Astrocyte of the cerebellum (primary cell): ENCODE measurements at regions of chr10 and their contacts with region 1.

Region 1: GRCh38 chr10:70324339-70324861 is 40.6 kb upstream of the NPFFR1 start:
- DNase-seq: no peak
- H3K4me3 ChIP-seq: no peak overlapping the region
- CTCF ChIP-seq: no peak

Region 2: DNA sequence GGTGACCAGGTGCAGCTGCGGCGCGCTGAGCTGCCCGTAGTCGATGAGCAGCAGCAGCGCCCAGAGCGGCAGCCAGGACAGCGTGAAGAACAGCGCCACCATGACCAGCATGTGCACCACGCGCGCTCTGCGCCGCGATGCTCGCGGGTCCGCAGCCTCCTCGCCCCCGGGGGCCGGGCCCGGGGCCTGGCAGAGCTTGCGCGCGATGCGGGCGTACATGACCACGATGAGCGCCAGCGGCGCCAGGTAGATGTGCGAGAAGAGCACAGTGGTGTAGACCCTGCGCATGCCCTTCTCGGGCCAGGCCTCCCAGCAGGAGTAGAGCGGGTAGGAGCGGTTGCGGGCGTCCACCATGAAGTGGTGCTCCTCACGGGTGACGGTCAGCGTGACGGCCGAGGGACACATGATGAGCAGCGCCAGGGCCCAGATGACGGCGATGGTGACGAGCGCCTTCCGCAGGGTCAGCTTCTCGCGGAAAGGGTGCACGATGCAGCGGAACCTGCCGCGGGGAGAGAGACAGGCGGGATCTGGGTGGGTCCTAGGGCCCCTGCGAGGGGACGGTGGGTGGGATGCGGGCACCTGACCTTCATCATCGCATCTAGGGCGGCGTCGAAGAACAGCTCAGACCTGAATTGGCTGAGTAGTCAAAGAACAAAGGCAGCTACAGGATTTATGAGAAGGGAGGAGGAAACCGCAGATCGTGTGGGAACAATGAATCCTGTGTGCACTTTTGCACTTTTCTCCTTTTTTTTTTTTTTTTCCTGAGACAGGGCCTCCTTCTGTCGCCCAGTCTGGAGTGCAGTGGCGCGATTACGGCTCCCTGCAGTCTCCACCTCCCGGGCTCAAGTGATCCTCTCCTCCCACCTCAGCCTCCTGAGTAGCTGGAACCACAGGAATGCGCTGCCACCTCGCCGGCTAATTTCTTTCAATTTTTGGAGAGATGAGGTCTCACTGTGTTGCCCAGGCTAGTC is 68.8 kb before region 1 on chr10:
- in situ Hi-C with region 1: loop called (anchors 5 kb)
- DNase-seq: no peak
- H3K4me3 ChIP-seq: no peak overlapping the region
- CTCF ChIP-seq: peak; percentile 4

Region 3: GRCh38 chr10:70283445-70284399 is 40.7 kb before region 1 on chr10 and contains the start of gene NPFFR1:
- in situ Hi-C with region 1: loop called (anchors 5 kb)
- DNase-seq: no peak
- H3K4me3 ChIP-seq: peak within 1 kb of the TSS; percentile 11
- CTCF ChIP-seq: no peak

Region 4: DNA sequence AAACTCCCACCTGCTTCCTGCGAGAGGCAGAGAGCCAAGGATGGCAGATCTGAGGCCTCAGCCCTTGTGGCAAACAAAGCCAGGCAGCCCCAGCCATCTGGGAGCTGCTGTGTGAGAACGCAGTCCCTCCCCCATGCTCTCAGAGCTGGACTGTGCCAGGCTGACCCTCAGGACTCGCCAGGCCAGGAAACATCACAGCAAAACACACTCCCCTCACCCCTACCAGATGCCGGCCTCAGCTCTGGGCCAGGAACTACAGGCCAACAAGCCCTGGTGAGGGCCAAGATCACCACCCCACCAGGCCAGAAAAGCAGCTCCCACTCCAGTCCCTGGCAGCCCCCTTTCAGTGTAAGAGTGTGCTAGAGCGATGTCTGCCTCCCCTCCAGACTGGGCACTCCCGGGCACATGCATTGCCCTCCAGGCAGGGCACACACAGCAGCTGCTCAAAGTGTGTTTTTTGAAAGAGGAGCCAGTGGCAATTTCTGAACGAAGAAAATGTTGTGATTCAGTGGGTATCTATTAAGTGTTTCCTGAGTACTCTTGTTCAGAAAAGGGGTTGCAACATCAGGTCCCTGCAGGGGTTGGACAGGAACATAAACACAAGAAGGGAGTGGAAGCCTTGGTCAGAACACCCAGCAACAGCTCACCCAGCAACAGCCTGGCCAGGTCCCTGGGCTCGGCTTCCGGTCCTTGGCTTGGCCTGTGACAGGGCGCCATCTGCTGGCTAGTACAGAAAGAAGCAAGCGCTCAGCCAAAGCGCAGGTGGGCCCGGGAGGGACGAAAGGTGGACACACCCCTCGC is 39.8 kb after region 1 on chr10:
- in situ Hi-C with region 1: no loop called
- DNase-seq: peak; percentile 95
- H3K4me3 ChIP-seq: peak overlapping the region; percentile 3
- CTCF ChIP-seq: peak; percentile 84

Region 5: GRCh38 chr10:70404036-70404786 is 79.8 kb after region 1 on chr10 and contains the start of gene EIF4EBP2:
- in situ Hi-C with region 1: no loop called
- DNase-seq: peak; percentile 91
- H3K4me3 ChIP-seq: peak within 1 kb of the TSS; percentile 93
- CTCF ChIP-seq: no peak